ENCODE measurements at regions of chr16 and their contacts with region 1.

Region 1: DNA sequence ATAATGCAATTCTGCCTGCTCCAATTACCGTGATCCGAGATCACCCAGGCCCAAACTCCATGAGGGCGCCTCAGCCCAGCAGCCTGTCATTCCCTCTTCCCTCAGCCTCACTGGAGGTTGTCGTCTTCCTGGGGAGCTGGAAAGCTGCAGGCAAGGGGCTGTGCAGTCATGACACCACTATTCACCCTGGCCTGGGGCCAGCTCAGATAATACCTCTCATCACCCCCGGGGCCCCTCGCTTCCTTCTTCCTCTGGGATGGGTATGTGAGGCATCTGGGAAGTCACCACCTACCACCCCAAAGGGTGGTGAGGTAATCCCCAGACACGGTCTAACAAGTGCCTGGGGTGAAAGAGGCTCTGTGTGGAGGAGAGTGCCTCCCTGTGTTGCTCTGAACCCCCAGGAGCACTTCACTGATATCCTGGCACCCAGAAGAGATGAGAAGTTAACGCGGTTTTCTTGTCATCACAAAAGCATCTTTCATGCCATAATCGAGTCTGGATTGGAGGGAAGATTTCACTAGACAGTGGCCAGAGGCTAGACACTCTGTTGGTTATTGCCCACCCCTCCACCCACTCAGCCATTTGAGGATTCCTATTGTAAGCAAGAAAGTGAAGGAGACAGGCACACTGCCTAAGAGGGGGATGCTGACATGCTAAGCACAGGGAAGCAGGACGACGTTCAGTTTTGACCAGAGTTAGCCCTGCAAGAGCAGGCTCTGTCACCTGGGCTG is 18.4 kb downstream of the CFAP20 start:
- DNase-seq: peak; percentile 44
- ATAC-seq: peak; percentile 77
- H3K4me3 ChIP-seq: no peak overlapping the region
- H3K27ac ChIP-seq: no peak overlapping the region
- H3K4me1 ChIP-seq: peaks cover 7% of the 10 kb centered on the region; the same call in 1 of the 2 replicates
- H3K27me3 ChIP-seq: no peaks in the 10 kb centered on the region
- CTCF ChIP-seq: no peak
- POLR2A ChIP-seq: no peak
- RAD21 ChIP-seq: no peak

Region 2: GRCh38 chr16:57899771-57900661 is 210.7 kb before region 1 on chr16:
- CTCF ChIA-PET with region 1: interaction called, 3 read pairs
- POLR2A ChIA-PET with region 1: no interaction called
- dilution Hi-C with region 1: no loop called
- in situ Hi-C with region 1: loop called (anchors 25 kb)
- intact Hi-C with region 1: no loop called
- DNase-seq: peak; percentile 62
- ATAC-seq: peak; percentile 93
- H3K4me3 ChIP-seq: no peak overlapping the region
- H3K27ac ChIP-seq: no peak overlapping the region
- H3K4me1 ChIP-seq: no peaks in the 10 kb centered on the region
- H3K27me3 ChIP-seq: peaks cover 26% of the 10 kb centered on the region
- CTCF ChIP-seq: peak; percentile 86
- POLR2A ChIP-seq: no peak
- RAD21 ChIP-seq: peak; percentile 89

Region 3: DNA sequence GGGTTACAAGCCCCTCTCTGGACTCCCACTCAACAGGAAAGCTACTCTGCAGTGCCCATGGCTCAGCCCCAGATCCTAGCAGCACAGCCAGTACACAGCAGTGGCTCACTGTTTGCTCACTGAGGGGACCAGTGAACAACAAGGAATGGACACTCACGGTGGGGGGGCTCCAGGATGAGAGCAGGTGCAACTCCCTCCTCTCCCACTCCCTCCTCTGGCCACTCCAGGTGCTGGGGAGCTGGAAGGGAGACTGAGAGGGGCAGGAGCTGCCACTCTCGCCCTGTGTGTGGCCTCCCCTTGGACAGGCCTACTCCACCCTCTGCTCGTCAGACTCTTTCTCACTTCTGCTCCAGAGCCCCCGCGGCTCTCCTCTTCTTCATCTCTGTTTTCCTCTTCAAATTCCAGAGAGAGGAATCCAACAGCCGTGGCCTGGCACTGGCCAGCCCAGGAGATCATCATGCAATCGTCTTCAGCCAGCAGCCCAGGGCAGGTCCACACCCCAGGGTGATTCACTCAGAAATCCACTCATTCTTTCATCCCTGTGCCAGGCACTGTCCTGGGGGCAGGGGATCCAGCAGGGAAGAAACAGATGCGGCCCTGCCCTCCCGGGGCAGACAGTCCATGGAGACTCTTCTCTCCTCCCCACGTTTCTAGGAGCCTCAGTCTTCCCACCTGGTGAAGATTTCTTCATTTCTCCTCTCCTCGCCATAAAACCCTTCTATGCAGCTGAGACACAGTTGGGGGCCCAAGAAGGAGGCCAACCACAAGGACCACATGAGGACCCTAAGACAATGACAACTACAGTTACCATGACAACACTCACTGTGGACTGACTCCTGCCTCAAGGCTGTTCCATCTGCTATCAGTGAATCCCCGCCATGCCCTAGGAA is 12.3 kb before region 1 on chr16:
- CTCF ChIA-PET with region 1: interaction called, 12 read pairs
- POLR2A ChIA-PET with region 1: no interaction called
- dilution Hi-C with region 1: no loop called
- in situ Hi-C with region 1: no loop called
- intact Hi-C with region 1: no loop called
- DNase-seq: peak; percentile 22
- ATAC-seq: peak; percentile 89
- H3K4me3 ChIP-seq: no peak overlapping the region
- H3K27ac ChIP-seq: no peak overlapping the region
- H3K4me1 ChIP-seq: no peaks in the 10 kb centered on the region
- H3K27me3 ChIP-seq: peaks cover 10% of the 10 kb centered on the region
- CTCF ChIP-seq: no peak
- POLR2A ChIP-seq: no peak
- RAD21 ChIP-seq: no peak

Region 4: DNA sequence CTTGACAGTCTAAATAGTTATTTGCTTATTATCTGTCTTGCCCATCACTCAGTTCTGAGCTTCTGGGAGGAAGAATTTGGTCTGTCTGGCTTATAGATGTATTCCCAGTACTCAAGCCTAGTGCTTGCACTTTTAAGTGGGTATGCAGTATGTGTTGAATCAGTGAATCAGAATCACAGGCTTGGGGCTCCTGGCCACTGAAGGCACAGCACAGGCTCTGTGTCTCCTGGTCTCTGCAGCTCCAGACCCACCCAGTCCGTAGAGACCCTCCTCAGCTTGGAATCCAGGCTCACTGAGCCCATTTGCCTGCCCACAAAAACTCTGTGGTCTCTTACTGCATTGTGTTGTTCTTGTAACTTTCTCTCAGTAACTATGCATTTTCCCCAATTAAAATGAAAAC is 37.8 kb after region 1 on chr16:
- CTCF ChIA-PET with region 1: no interaction called
- POLR2A ChIA-PET with region 1: no interaction called
- dilution Hi-C with region 1: no loop called
- in situ Hi-C with region 1: no loop called
- intact Hi-C with region 1: loop called (anchors 2 kb)
- DNase-seq: no peak
- ATAC-seq: no peak
- H3K4me3 ChIP-seq: no peak overlapping the region
- H3K27ac ChIP-seq: no peak overlapping the region
- H3K4me1 ChIP-seq: no peaks in the 10 kb centered on the region
- H3K27me3 ChIP-seq: peaks cover 6% of the 10 kb centered on the region
- CTCF ChIP-seq: no peak
- POLR2A ChIP-seq: no peak
- RAD21 ChIP-seq: no peak

Measured in IMR-90 (cell line).